Activated CD4-positive, alpha-beta memory T cell treated with anti-CD3 and anti-CD28 coated beads for 36 hours (primary cell): ENCODE measurements at regions of chr2 and their contacts with region 1.

Region 1: GRCh38 chr2:168002021-168002553 is 245.3 kb downstream of the STK39 start:
- DNase-seq: no peak
- H3K4me3 Mint-ChIP-seq: peak overlapping the region; percentile 18
- H3K27ac Mint-ChIP-seq: peak overlapping the region; percentile 40
- H3K4me1 Mint-ChIP-seq: peaks cover 23% of the 10 kb centered on the region
- H3K27me3 Mint-ChIP-seq: no peaks in the 10 kb centered on the region

Region 2: DNA sequence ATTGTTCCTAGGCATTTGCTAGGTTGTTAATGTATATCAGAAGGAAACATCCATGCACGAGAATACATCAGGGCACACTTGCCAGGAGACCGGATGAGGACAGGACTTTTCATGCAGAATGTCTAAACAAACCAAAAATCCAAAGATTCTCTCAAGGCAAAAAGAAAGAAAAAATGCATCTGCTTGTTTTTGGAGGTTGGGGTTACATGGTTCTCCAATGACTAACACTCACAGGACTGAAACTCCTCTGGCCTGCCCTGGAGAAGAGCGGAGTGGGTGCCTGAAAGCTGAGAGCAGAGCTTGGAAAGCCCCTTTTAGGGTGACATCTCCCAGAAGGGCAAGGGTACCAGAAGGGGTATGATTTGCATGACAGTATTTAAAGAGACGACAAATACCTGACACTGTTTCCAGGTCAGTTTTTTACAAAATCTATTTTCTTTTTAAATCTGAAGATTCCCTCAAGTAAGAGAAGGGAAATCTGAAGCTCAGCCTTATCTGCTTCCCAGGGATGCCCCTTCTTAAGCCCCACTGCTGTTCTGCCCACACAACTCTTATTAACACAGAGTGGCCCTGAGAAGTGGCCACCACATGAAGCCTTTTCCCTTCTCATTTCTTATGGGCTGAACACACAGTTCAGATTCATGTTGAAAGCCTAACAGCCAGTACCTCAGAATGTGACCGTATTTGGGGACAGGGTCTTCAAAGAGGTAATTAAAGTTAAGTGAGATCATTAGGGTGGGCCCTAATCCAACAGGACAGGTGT is 29.0 kb after region 1 on chr2:
- CTCF ChIA-PET with region 1: interaction called, 3 read pairs
- POLR2A ChIA-PET with region 1: no interaction called
- intact Hi-C with region 1: loop called (anchors 1 kb)
- DNase-seq: peak; percentile 50
- H3K4me3 Mint-ChIP-seq: no peak overlapping the region
- H3K27ac Mint-ChIP-seq: peak overlapping the region; percentile 49
- H3K4me1 Mint-ChIP-seq: peaks cover 19% of the 10 kb centered on the region
- H3K27me3 Mint-ChIP-seq: no peaks in the 10 kb centered on the region